ENCODE measurements at regions of chrX and their contacts with region 1.

Region 1: DNA sequence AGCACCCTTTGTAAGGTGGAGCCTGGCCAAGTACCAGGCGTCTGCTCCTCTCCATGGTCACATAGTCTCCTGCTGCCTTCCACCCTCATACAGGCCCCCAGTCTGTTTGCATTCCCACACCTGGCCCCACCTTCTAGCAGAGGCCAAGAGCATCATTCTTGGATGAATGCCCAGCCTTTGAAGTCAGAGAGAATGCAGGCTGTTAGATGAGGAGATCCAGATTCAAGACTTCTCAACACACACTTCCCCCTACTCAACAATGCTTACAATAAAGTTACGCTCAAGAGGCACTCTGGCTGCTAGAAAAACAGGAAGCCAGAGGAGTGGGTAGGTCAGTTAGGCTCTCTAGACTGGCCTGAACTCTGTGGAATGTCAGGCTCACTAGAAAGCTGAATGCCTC is 43.3 kb downstream of the SHROOM4 start:
- DNase-seq: no peak
- H3K4me3 ChIP-seq: no peak overlapping the region
- CTCF ChIP-seq: no peak
- POLR2A ChIP-seq: no peak

Region 2: GRCh38 chrX:48989483-48989882 is 1781.2 kb before region 1 on chrX:
- intact Hi-C with region 1: no loop called
- DNase-seq: no peak
- H3K4me3 ChIP-seq: no peak overlapping the region
- CTCF ChIP-seq: no peak
- POLR2A ChIP-seq: no peak

Region 3: DNA sequence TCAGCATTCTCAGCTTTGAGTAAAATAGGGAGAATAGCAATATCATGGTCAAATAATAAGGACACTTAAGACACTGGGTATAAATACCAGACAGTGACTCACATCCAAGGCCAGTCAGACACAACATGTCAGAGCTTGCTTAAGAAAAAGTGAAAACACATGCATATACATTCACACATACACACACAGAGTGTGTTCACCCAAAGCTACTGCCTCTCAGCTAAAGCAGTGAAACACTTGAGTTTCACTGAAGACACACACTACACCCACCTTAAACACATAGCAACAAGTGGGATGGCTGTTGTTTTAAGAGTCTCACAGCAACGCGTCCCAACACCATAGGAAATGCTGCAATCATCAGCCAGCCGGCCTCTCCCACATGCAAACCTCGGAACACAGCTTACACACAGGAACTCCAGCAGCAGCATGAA is 28.8 kb after region 1 on chrX:
- intact Hi-C with region 1: loop called (anchors 2 kb)
- DNase-seq: peak in 1 of 2 donors; percentile 14
- H3K4me3 ChIP-seq: no peak overlapping the region
- CTCF ChIP-seq: no peak
- POLR2A ChIP-seq: no peak